Kidney (tissue), 22 donors: ENCODE measurements at regions of chr3 and their contacts with region 1.

Region 1: DNA sequence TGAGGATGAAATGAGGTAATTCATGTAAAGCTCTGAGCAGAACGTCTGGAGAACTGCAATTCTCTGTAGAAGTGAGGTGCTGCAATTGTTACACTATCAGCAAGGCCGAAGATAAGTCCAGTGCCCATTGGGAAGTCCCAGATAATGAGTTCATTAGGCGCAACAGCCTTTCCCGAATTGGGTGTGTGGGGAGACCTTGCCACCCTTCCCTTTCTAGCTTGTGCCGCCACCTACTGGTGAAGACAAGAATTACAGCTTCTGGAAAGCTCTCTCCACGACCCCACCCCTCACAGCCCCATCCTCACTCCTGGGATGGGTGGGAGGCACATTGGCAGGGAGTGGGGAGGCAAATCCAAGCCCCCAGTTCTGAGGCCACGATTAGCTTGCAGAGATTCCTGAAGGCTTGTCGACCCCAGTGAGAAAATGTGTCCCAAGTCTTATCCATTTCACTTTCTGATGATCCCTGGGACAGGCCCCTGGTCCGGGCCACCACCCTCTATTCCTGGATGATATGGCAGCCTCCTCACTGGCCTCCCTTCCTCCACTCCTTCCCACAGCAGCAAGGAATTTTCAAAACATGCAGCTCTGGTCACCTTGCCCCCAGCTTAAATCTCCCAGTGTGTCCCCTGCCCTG is 36.4 kb downstream of the FAM3D start:
- DNase-seq: peak in 4 of 5 donors; percentile 74 to 87 (median 77)
- H3K4me3 ChIP-seq: no peak overlapping the region
- H3K27ac ChIP-seq: no peak overlapping the region
- H3K4me1 ChIP-seq: peaks cover 0 to 29% (median 19%) of the 10 kb centered on the region in 3 donors
- H3K27me3 ChIP-seq: no peaks in the 10 kb centered on the region
- CTCF ChIP-seq: peak; percentile 86

Region 2: GRCh38 chr3:58324391-58325390 is 305.5 kb before region 1 on chr3:
- intact Hi-C with region 1: loop called (anchors 10 kb)
- DNase-seq: no peak
- H3K4me3 ChIP-seq: no peak overlapping the region
- H3K27ac ChIP-seq: peak overlapping the region; percentile 36 to 79
- H3K4me1 ChIP-seq: peaks cover 0 to 10% (median 4%) of the 10 kb centered on the region in 3 donors
- H3K27me3 ChIP-seq: no peaks in the 10 kb centered on the region
- CTCF ChIP-seq: no peak

Region 3: GRCh38 chr3:58568572-58569286 is 61.5 kb before region 1 on chr3:
- intact Hi-C with region 1: loop called (anchors 5 kb)
- DNase-seq: peak; percentile 71 to 85 (median 83)
- H3K4me3 ChIP-seq: no peak overlapping the region
- H3K27ac ChIP-seq: peak overlapping the region in 1 of 2 donors; percentile 26
- H3K4me1 ChIP-seq: peaks cover 0 to 8% (median 0%) of the 10 kb centered on the region in 3 donors
- H3K27me3 ChIP-seq: no peaks in the 10 kb centered on the region
- CTCF ChIP-seq: peak; percentile 91

Region 4: DNA sequence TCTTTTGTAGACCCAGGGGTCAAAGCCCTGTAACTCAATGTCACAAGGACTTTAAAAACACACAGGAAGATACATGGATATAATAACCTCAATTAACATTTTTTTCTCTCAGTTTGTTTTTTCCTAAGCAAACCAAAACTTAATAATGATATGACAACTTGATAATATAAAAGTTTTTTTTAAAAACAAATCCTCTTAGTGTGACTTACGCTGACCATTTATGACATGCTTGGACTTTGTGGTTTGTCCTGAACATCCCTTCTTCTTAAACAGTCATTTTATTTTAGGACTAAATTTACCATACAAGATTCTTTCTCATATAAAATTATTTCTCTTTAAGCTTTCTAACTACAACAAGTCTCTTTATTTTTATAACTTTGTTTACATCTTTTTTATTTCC is 61.8 kb after region 1 on chr3:
- intact Hi-C with region 1: no loop called
- DNase-seq: peak in 2 of 5 donors; percentile 26 to 40
- H3K4me3 ChIP-seq: no peak overlapping the region
- H3K27ac ChIP-seq: no peak overlapping the region
- H3K4me1 ChIP-seq: peaks cover 0 to 14% (median 0%) of the 10 kb centered on the region in 3 donors
- H3K27me3 ChIP-seq: no peaks in the 10 kb centered on the region
- CTCF ChIP-seq: no peak